OCI-LY7 (cell line): ENCODE measurements at regions of chr5 and their contacts with region 1.

Region 1: GRCh38 chr5:107519900-107520354 is 150.8 kb downstream of the EFNA5 start:
- DNase-seq: peak; percentile 87
- H3K4me3 ChIP-seq: peak overlapping the region; percentile 45
- H3K27ac ChIP-seq: peak overlapping the region; percentile 77
- H3K4me1 ChIP-seq: peaks cover 88% of the 10 kb centered on the region
- CTCF ChIP-seq: no peak

Region 2: DNA sequence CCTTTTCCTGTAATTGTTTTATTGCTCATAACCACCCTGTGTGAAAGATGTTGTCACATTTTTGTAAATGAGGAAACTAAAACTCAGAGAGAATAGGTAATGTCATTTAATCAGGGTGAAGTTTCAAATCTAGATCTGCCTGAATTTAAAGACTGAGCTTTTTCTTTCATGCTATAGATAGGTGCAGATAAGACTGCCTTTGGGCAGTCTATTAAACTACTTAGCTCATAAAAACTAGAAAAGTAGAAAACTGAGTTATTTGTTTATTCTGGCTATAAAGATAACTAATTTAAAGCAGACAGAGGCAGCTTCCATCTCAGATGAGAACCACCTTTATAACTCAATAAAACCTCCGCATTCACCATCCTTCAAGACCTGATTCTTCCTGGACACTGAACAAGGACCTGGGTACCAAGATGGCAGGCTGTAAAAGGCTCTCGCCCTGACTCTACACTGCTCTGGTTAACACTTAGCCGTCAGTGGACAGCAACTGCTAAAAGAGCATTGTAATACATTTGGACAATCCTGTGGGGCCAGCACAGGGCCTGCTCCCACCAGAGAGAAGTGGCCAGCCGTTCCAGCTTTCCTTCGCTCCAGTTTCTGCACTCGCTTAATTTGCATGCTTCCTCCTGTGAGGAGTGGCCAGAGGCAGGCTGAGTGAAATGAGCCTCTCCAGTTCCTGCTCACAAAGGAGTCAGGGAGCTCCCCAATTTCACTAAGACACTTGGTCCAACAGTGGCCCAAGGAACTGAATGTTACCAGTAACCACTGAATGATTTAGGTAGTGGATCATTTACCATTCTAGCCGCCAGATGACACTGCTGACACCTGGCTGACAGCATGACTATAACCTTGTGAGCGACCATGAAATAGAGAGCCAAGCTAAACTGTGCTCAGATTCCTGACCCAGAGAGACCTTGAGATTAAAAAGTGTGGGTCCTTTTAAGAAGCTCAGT is 415.6 kb before region 1 on chr5:
- CTCF ChIA-PET with region 1: no interaction called
- POLR2A ChIA-PET with region 1: no interaction called
- intact Hi-C with region 1: loop called (anchors 10 kb)
- DNase-seq: peak; percentile 75
- H3K4me3 ChIP-seq: no peak overlapping the region
- H3K27ac ChIP-seq: no peak overlapping the region
- H3K4me1 ChIP-seq: peaks cover 6% of the 10 kb centered on the region
- CTCF ChIP-seq: peak; percentile 78

Region 3: DNA sequence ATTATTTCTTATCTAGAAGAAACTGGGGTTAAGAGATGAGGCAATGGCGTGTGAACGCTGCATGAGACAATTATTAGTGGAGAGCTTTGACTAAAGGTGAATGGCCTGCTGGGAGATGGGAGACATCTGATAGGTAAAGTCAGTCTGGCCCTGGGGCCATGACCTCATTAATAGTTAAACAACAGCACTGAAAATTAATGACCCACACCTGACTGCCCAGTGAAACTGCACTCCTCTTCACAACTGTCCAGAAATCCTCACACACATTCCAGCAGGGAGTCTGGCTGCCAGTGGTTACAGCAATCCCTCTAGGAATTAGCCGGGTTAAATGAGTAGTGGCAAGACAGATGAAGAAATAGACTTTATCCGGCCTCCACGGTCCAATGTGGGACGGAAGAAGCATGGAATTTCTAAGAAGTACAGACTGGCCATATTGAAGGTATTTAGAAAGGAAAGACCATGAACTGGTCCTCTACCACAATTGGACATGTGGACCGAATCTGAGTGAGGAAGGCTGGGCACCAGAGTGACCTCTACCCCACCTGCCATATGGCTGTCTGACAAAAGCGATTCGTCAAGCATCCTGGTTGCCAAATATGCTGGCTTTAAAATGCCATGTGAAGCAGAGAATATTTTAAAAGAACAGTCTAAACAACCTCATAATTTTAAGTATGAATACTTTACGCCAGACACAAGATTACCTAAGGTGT is 12.4 kb after region 1 on chr5:
- CTCF ChIA-PET with region 1: no interaction called
- POLR2A ChIA-PET with region 1: interaction called, 13 read pairs
- intact Hi-C with region 1: no loop called
- DNase-seq: no peak
- H3K4me3 ChIP-seq: no peak overlapping the region
- H3K27ac ChIP-seq: no peak overlapping the region
- H3K4me1 ChIP-seq: no peaks in the 10 kb centered on the region
- CTCF ChIP-seq: no peak

Region 4: DNA sequence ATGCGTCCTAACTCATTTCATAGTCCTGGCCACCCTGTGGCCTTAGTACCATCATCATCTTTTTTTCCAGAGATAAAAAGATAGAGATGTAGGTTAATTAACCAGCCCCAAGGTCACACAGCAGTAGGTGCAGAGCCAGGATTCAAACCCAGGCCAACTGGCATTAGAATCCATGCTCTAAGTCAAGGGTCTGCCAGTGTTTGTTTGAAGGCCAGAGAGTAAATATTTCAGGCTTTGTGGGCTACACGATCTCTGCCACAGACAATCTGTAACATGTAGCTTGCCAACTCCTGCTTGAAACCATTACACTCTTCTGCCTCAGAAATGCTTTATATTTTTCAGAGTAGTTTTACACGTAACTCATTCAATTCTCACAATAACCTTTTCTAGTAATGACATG is 31.2 kb after region 1 on chr5:
- CTCF ChIA-PET with region 1: no interaction called
- POLR2A ChIA-PET with region 1: interaction called, 11 read pairs
- intact Hi-C with region 1: no loop called
- DNase-seq: no peak
- H3K4me3 ChIP-seq: no peak overlapping the region
- H3K27ac ChIP-seq: no peak overlapping the region
- H3K4me1 ChIP-seq: peaks cover 81% of the 10 kb centered on the region
- CTCF ChIP-seq: no peak

Region 5: GRCh38 chr5:107564896-107565512 is 45.1 kb after region 1 on chr5:
- CTCF ChIA-PET with region 1: interaction called, 33 read pairs
- POLR2A ChIA-PET with region 1: interaction called, 154 read pairs
- intact Hi-C with region 1: no loop called
- DNase-seq: no peak
- H3K4me3 ChIP-seq: no peak overlapping the region
- H3K27ac ChIP-seq: no peak overlapping the region
- H3K4me1 ChIP-seq: peaks cover 39% of the 10 kb centered on the region
- CTCF ChIP-seq: no peak